ENCODE measurements at regions of chr4 and their contacts with region 1.

Region 1: GRCh38 chr4:28469886-28470285 is 1609.2 kb downstream of the STIM2 start:
- DNase-seq: no peak
- H3K4me3 ChIP-seq: no peak overlapping the region
- H3K27ac ChIP-seq: no peak overlapping the region
- H3K4me1 ChIP-seq: no peaks in the 10 kb centered on the region
- H3K27me3 ChIP-seq: no peaks in the 10 kb centered on the region
- CTCF ChIP-seq: no peak

Region 2: GRCh38 chr4:28536124-28536523 is 66.2 kb after region 1 on chr4:
- CTCF ChIA-PET with region 1: no interaction called
- dilution Hi-C with region 1: loop called (anchors 10 kb)
- in situ Hi-C with region 1: no loop called
- intact Hi-C with region 1: no loop called
- DNase-seq: no peak
- H3K4me3 ChIP-seq: no peak overlapping the region
- H3K27ac ChIP-seq: no peak overlapping the region
- H3K4me1 ChIP-seq: no peaks in the 10 kb centered on the region
- H3K27me3 ChIP-seq: no peaks in the 10 kb centered on the region
- CTCF ChIP-seq: no peak

Region 3: GRCh38 chr4:28723371-28723770 is 253.5 kb after region 1 on chr4:
- CTCF ChIA-PET with region 1: no interaction called
- dilution Hi-C with region 1: no loop called
- in situ Hi-C with region 1: no loop called
- intact Hi-C with region 1: no loop called
- DNase-seq: no peak
- H3K4me3 ChIP-seq: no peak overlapping the region
- H3K27ac ChIP-seq: no peak overlapping the region
- H3K4me1 ChIP-seq: no peaks in the 10 kb centered on the region
- H3K27me3 ChIP-seq: no peaks in the 10 kb centered on the region
- CTCF ChIP-seq: no peak

Measured in mammary epithelial cell (primary cell).